Activated CD4-positive, alpha-beta T cell treated with anti-CD3 and anti-CD28 coated beads, Interleukin-2, amount 10 ng/mL, durations not matched to agents 24 days and 14 days (primary cell): ENCODE measurements at regions of chr9 and their contacts with region 1.

Region 1: DNA sequence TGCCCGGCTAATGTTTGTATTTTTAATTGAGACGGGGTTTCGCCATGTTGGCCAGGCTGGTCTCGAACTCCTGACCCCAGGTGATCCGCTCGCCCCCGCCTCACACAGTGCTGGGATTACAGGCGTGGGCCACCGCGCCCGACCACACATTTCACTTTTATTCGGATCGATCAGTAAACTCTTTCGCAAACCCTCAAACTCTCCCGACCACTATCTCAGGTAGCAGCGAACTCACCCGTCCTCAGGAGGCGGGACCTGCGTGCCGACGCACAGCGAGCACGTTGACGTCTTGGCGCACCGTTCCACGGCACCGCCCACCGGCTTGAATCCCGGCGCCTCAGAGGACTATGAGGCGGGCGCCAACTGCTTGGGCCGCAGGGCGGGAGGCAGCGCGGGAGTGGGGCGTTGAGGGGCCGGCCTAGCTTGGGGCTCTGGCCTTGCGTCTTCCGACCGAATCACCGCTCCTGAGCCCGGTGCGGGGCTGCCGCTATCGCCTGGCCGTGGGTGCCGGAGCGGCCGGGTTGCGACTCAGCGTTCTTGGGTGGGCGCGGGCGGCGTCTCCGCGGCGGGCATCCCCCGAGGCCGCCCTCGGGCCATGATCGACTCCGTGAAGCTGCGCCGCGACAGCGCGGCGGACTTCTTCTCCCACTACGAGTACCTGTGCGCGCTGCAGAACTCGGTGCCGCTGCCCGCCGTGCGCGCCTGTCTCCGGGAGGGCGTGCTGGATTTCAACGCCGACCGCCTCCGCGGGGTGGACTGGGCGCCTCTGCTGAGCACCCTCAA is at the start of gene CEP78:
- DNase-seq: peak; percentile 97
- H3K4me3 Mint-ChIP-seq: peak within 1 kb of the TSS; percentile 72
- H3K27ac Mint-ChIP-seq: peak within 1 kb of the TSS; percentile 93
- H3K4me1 Mint-ChIP-seq: peaks cover 25% of the 10 kb centered on the region
- H3K27me3 Mint-ChIP-seq: no peaks in the 10 kb centered on the region
- total RNA-seq, gene CEP78: 34.5 and 39.1 TPM in 2 replicates

Region 2: GRCh38 chr9:77177161-77177893 is 1058.6 kb before region 1 on chr9 and contains the start of gene VPS13A:
- intact Hi-C with region 1: loop called (anchors 2 kb)
- DNase-seq: peak; percentile 97
- H3K4me3 Mint-ChIP-seq: peak within 1 kb of the TSS; percentile 99
- H3K27ac Mint-ChIP-seq: peak within 1 kb of the TSS; percentile 92
- H3K4me1 Mint-ChIP-seq: peaks cover 22% of the 10 kb centered on the region
- H3K27me3 Mint-ChIP-seq: peaks cover 15% of the 10 kb centered on the region
- total RNA-seq, gene VPS13A: 44.9 and 47.7 TPM in 2 replicates

Region 3: DNA sequence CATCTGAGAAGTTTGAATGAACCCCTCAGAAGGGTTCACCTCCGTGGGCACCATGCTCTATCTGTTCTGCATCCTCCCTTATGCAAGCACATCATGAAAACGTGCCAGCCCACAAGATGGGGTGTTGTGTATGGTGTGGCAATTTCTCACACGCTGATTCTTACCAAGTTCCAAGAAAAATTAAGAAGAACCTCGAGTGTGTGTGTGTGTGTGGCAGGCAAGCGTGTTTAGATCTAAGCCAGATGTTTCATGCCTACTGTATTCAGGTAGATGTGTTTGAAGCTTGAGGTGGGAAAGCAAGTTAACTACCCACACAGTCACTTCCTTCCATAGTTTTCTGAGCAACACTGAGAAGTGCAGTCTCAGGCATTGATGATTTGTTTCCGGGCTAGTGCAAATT is 510.1 kb before region 1 on chr9:
- intact Hi-C with region 1: loop called (anchors 10 kb)
- DNase-seq: peak; percentile 73
- H3K4me3 Mint-ChIP-seq: peak overlapping the region; percentile 13
- H3K27ac Mint-ChIP-seq: peak overlapping the region; percentile 87
- H3K4me1 Mint-ChIP-seq: peaks cover 27% of the 10 kb centered on the region
- H3K27me3 Mint-ChIP-seq: no peaks in the 10 kb centered on the region

Region 4: GRCh38 chr9:77977210-77977611 is 258.7 kb before region 1 on chr9:
- intact Hi-C with region 1: loop called (anchors 10 kb)
- DNase-seq: peak; percentile 84
- H3K4me3 Mint-ChIP-seq: peak overlapping the region; percentile 68
- H3K27ac Mint-ChIP-seq: peak overlapping the region; percentile 91
- H3K4me1 Mint-ChIP-seq: peaks cover 44% of the 10 kb centered on the region
- H3K27me3 Mint-ChIP-seq: no peaks in the 10 kb centered on the region

Region 5: GRCh38 chr9:78118742-78119473 is 117.0 kb before region 1 on chr9:
- intact Hi-C with region 1: no loop called
- DNase-seq: peak; percentile 64
- H3K4me3 Mint-ChIP-seq: peak overlapping the region; percentile 58
- H3K27ac Mint-ChIP-seq: peak overlapping the region; percentile 43
- H3K4me1 Mint-ChIP-seq: peaks cover 29% of the 10 kb centered on the region
- H3K27me3 Mint-ChIP-seq: no peaks in the 10 kb centered on the region

Region 6: GRCh38 chr9:78130004-78130403 is 105.9 kb before region 1 on chr9:
- intact Hi-C with region 1: loop called (anchors 10 kb)
- DNase-seq: no peak
- H3K4me3 Mint-ChIP-seq: no peak overlapping the region
- H3K27ac Mint-ChIP-seq: no peak overlapping the region
- H3K4me1 Mint-ChIP-seq: peaks cover 20% of the 10 kb centered on the region
- H3K27me3 Mint-ChIP-seq: peaks cover 26% of the 10 kb centered on the region

Region 7: GRCh38 chr9:78296893-78297671 is 61.1 kb after region 1 on chr9 and contains the start of gene PSAT1:
- intact Hi-C with region 1: loop called (anchors 1 kb)
- DNase-seq: peak; percentile 98
- H3K4me3 Mint-ChIP-seq: peak within 1 kb of the TSS; percentile 96
- H3K27ac Mint-ChIP-seq: peak within 1 kb of the TSS; percentile 97
- H3K4me1 Mint-ChIP-seq: peaks cover 36% of the 10 kb centered on the region
- H3K27me3 Mint-ChIP-seq: no peaks in the 10 kb centered on the region
- total RNA-seq, gene PSAT1: 88.5 and 91.3 TPM in 2 replicates

Region 8: GRCh38 chr9:78314953-78315870 is 79.3 kb after region 1 on chr9:
- intact Hi-C with region 1: no loop called
- DNase-seq: no peak
- H3K4me3 Mint-ChIP-seq: no peak overlapping the region
- H3K27ac Mint-ChIP-seq: peak overlapping the region; percentile 64
- H3K4me1 Mint-ChIP-seq: peaks cover 9% of the 10 kb centered on the region
- H3K27me3 Mint-ChIP-seq: no peaks in the 10 kb centered on the region

Region 9: DNA sequence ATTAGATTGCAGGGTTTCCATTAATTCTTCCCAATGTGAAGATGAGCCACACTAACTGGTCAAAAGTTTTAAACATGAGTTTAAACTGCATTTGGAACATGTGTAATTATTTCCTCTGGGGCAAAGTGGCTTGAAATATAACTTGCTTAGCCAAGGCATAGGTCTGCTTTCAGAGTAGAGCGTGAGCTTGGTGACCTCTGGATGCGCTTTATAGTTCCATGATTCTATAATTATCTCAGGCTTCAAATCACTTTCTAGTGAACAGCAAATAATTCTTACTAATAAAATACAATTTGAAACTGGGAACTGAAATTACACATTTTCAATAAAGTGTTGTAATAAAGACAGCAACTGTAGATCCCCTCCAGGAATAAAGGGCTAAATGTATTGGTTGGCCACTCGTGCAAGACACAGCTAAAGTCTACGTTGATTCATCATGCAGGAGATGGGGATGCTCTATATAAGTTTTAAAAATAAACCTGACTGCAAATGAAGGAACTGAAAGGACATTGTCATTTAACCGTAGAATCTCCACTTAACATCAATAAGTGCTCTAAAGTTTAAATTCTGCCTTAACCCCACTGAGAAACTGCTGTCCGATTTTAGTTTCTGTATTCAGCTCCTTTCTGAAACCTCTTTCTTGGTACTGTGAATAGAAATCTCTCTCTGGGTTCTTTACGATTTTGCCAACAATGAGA is 521.0 kb after region 1 on chr9:
- intact Hi-C with region 1: no loop called
- DNase-seq: no peak
- H3K4me3 Mint-ChIP-seq: no peak overlapping the region
- H3K27ac Mint-ChIP-seq: no peak overlapping the region
- H3K4me1 Mint-ChIP-seq: no peaks in the 10 kb centered on the region
- H3K27me3 Mint-ChIP-seq: no peaks in the 10 kb centered on the region